ENCODE measurements at regions of chr14 and their contacts with region 1.

Region 1: GRCh38 chr14:104563742-104564615 is 15.6 kb upstream of the C14orf180 start:
- DNase-seq: peak; percentile 56 to 95 (median 78)

Region 2: GRCh38 chr14:104078031-104078455 is 485.9 kb before region 1 on chr14:
- intact Hi-C with region 1: loop called (anchors 5 kb)
- DNase-seq: peak; percentile 75 to 98 (median 90)

Region 3: DNA sequence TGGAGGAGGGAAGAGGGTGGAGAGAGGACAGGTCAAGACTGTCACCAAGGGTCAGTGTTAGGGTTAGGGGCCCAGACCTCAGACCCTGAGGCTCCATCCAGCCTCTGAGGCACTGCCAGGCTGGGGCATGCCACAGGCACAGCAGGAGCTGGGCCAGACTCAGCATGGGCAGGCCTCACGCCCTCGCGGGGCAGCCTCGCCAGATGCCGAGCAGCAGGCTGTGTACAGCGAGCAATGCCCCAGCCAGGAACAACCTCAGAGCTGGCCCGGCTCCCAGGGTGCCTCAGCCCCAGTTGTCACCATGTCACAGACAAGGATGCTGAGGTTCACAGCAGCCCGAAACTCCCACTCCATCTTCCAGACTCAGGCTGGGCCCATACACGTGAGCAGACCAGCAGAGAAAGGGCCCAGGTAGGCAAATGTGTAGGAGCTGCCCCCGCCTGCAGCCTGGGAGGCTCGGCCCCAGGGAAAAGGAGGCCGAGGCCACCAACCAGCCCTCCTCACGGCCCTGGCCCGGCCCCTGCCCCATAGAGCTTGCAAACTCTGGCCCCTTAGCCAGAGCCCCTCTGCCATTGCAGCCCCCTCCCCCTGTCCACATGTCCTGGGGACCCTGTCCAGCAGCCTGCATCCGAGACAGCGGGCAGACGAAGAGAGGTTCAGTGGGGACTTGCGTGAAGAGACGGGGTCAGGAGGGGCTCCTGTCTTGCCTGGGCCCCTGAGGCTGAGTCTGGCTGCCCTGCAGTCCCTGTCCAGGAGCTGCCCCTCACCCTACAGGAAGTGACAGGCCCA is 23.0 kb after region 1 on chr14:
- intact Hi-C with region 1: no loop called
- DNase-seq: peak in 8 of 10 donors; percentile 39 to 93 (median 52)

Region 4: GRCh38 chr14:104786091-104786586 is 222.2 kb after region 1 on chr14:
- intact Hi-C with region 1: no loop called
- DNase-seq: no peak

Measured in posterior cingulate gyrus (tissue), 11 donors.